GM13976 (cell line): ENCODE measurements at regions of chr1 and their contacts with region 1.

Region 1: GRCh38 chr1:56831871-56832693 is 12.9 kb upstream of the FYB2 start:
- DNase-seq: peak; percentile 74
- CTCF ChIP-seq: peak; percentile 92

Region 2: DNA sequence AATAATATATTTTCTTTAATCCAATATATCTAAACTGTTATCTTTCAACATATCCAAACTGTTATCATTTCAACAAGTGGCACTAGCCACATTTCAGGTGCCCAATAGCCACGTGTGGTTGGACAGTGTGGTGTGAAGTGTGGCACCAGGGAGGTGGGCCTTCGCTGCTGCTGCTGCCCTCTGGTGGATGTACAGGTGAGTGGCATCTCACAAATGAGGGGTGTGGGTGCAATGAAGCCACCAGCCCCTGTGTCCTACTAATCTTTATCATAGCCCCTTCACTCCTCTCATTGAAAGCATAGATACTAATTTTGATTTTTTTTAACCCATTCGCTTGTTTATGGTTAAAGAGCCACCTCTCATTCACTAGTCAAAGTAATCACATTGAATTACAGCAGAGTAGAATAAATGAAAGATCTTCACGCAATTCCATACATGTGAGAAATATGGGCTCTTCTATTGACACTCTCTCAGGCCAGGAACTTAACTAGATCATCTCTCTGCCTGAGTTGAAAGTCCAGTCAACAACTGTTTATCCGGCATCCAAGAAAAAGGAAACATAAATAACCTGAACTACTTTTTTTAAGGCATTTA is 1215.3 kb after region 1 on chr1:
- in situ Hi-C with region 1: loop called (anchors 25 kb)
- DNase-seq: peak; percentile 62
- CTCF ChIP-seq: peak; percentile 69